ENCODE measurements at regions of chr7 and their contacts with region 1.

Region 1: GRCh38 chr7:111312964-111313363 is 222.0 kb downstream of the LRRN3 start:
- DNase-seq: peak; percentile 29
- ATAC-seq: peak; percentile 46; the same call in 1 of the 2 replicates
- H3K4me3 ChIP-seq: no peak overlapping the region
- H3K27ac ChIP-seq: no peak overlapping the region
- H3K4me1 ChIP-seq: no peaks in the 10 kb centered on the region
- H3K27me3 ChIP-seq: no peaks in the 10 kb centered on the region
- CTCF ChIP-seq: peak; percentile 27; the same call in 1 of the 2 replicates

Region 2: GRCh38 chr7:111089822-111090426 is 223.0 kb before region 1 on chr7:
- CTCF ChIA-PET with region 1: no interaction called
- POLR2A ChIA-PET with region 1: no interaction called
- intact Hi-C with region 1: loop called (anchors 5 kb)
- DNase-seq: peak; percentile 65
- ATAC-seq: no peak
- H3K4me3 ChIP-seq: no peak overlapping the region
- H3K27ac ChIP-seq: no peak overlapping the region
- H3K4me1 ChIP-seq: peaks cover 12% of the 10 kb centered on the region
- H3K27me3 ChIP-seq: no peaks in the 10 kb centered on the region
- CTCF ChIP-seq: peak; percentile 72